Activated CD8-positive, alpha-beta T cell treated with anti-CD3 and anti-CD28 coated beads for 36 hours (primary cell): ENCODE measurements at regions of chr7 and their contacts with region 1.

Region 1: DNA sequence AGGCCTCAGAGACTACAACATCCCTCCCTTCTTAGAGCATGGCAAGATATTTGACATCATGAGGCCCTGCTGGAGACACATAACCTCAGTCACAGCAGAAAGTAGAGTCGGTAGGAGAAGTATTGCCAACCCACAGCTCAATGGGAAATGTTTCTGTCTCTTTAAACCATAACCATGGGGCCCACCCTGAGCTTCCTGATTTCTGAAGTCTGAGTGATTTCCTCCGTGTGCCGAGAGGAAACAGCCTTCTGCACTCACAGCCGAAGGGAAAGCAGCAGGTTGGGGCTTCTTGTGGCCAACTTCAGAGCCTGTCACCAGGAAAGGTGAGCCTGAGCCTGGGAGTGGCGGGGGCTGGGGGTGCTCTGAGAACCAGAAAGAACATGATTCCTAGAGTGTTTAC is at the start of gene GIMAP1:
- DNase-seq: peak; percentile 69
- ATAC-seq: peak; percentile 60
- H3K4me3 Mint-ChIP-seq: peak within 1 kb of the TSS; percentile 78
- H3K27ac Mint-ChIP-seq: peak within 1 kb of the TSS; percentile 85
- H3K4me1 Mint-ChIP-seq: peaks cover 53% of the 10 kb centered on the region
- H3K27me3 Mint-ChIP-seq: no peaks in the 10 kb centered on the region
- CTCF ChIP-seq: no peak
- total RNA-seq, gene GIMAP1: 8.7 to 9.3 TPM

Region 2: GRCh38 chr7:150567169-150567568 is 149.2 kb before region 1 on chr7 and contains the start of gene GIMAP4:
- CTCF ChIA-PET with region 1: interaction called, 11 read pairs
- POLR2A ChIA-PET with region 1: interaction called, 5 read pairs
- intact Hi-C with region 1: no loop called
- DNase-seq: peak; percentile 51
- ATAC-seq: peak; percentile 64
- H3K4me3 Mint-ChIP-seq: peak within 1 kb of the TSS; percentile 84
- H3K27ac Mint-ChIP-seq: peak within 1 kb of the TSS; percentile 99
- H3K4me1 Mint-ChIP-seq: peaks cover 67% of the 10 kb centered on the region
- H3K27me3 Mint-ChIP-seq: no peaks in the 10 kb centered on the region
- CTCF ChIP-seq: no peak
- total RNA-seq, gene GIMAP4: 88.3 to 97.8 TPM

Region 3: DNA sequence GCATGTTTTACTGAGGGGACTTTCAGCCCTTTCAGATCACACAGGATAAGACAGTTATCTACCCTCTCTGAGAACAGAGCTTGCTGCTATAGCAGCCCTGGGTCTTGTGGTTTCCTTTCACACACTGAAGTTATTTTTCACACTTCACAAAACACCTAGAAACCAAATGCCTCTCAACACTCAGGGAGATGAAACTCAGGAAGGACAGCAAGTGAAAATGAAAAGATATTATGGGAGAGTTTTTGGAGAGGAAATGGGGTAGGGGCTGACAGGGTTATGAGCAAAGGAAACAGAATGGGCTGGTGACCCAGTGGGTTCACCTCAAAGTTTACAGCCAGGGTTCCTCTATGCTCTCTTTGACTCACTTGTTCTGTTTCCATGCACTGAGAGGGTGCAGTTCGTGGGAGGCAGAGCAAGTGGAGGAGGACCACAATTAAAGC is 47.9 kb before region 1 on chr7:
- CTCF ChIA-PET with region 1: interaction called, 7 read pairs
- POLR2A ChIA-PET with region 1: interaction called, 6 read pairs
- intact Hi-C with region 1: loop called (anchors 5 kb)
- DNase-seq: peak; percentile 85
- ATAC-seq: peak; percentile 73
- H3K4me3 Mint-ChIP-seq: peak overlapping the region; percentile 54
- H3K27ac Mint-ChIP-seq: peak overlapping the region; percentile 97
- H3K4me1 Mint-ChIP-seq: peaks cover 86% of the 10 kb centered on the region
- H3K27me3 Mint-ChIP-seq: no peaks in the 10 kb centered on the region
- CTCF ChIP-seq: no peak

Region 4: GRCh38 chr7:150703209-150703608 is 13.2 kb before region 1 on chr7:
- CTCF ChIA-PET with region 1: interaction called, 10 read pairs
- POLR2A ChIA-PET with region 1: interaction called, 3 read pairs
- intact Hi-C with region 1: no loop called
- DNase-seq: no peak
- ATAC-seq: no peak
- H3K4me3 Mint-ChIP-seq: no peak overlapping the region
- H3K27ac Mint-ChIP-seq: no peak overlapping the region
- H3K4me1 Mint-ChIP-seq: peaks cover 4% of the 10 kb centered on the region
- H3K27me3 Mint-ChIP-seq: no peaks in the 10 kb centered on the region
- CTCF ChIP-seq: no peak

Region 5: DNA sequence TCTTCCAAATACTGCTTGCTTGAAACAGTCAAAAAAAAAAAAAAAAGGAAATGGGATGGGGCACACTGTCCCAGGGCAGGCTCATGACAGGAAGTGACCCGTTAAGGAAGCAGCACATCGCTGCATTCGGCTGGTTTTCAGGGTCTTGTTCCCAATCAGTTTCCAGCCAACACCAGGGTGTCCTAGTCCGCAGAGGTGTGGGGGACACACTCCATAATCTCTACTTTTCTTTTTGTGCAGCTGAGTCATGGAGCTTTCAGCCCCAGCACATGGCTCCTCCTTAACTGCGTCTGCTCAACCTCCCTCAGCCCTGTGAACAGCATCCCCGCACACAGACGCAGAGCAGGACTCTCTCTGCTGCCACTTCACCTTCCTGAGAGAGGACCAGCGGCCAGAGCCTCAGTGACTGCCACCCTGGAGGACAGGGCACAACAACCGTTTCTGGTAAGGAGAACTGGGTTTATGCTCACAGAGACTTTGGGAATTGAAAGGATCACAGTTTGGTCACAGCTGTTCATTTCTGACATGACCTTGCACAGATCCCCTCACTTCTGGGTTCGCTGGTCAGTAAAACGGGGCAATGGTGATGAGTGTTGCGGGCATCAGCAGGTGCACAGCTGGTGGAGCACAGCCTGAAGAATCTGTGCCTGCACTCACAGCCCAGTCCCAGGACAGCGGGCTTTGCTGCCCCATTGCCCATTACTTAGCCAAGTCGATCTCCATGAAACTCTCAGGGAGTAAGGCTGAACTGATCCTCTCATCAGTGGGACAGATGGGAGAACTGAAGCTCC is 21.1 kb after region 1 on chr7 and contains the start of gene GIMAP5:
- CTCF ChIA-PET with region 1: interaction called, 42 read pairs
- POLR2A ChIA-PET with region 1: interaction called, 63 read pairs
- intact Hi-C with region 1: no loop called
- DNase-seq: peak; percentile 70
- ATAC-seq: peak; percentile 60
- H3K4me3 Mint-ChIP-seq: peak within 1 kb of the TSS; percentile 89
- H3K27ac Mint-ChIP-seq: peak within 1 kb of the TSS; percentile 97
- H3K4me1 Mint-ChIP-seq: peaks cover 72% of the 10 kb centered on the region
- H3K27me3 Mint-ChIP-seq: no peaks in the 10 kb centered on the region
- CTCF ChIP-seq: no peak
- total RNA-seq, gene GIMAP5: 37.6 to 40.7 TPM